Right ventricle myocardium inferior (tissue), 1 donor: ENCODE measurements at regions of chr4 and their contacts with region 1.

Region 1: DNA sequence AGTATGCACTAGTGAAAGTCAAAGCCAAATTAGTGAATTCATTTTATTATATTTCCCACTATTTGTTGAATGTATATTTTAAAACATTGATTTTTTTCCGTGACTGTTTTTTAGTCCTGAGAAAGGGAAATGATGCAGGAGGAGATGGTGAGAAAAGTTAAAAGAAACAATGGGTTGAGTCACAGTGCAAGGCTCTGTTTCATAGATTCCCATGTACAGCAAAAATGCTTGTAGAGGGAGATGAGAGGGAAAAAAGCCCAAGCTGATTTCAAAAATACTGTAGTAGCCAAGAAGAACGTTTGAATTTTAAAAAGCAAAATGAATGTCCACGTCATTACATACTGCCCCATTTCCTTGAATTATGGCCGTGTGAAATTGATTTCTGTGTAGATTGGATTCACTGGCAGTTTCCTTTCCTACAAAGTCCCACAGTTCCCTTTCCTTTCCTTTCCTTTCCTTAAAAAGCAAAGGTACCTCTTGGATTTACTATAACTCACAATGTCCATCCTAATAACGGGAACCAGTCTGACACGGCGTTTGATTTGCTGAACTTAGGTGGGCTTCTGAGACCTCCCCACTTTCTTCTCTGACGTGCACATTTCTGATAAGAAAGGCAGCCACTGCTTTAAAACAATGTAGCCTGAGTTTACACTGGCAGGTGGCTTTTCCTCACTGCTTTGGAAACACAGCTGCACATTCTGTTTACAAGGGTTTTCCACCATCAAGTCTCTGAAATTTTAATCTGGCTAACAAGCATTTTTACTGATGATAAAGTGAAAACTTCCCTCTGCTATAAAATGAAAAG is 63.7 kb downstream of the SPCS3 start:
- DNase-seq: no peak
- ATAC-seq: no peak

Region 2: DNA sequence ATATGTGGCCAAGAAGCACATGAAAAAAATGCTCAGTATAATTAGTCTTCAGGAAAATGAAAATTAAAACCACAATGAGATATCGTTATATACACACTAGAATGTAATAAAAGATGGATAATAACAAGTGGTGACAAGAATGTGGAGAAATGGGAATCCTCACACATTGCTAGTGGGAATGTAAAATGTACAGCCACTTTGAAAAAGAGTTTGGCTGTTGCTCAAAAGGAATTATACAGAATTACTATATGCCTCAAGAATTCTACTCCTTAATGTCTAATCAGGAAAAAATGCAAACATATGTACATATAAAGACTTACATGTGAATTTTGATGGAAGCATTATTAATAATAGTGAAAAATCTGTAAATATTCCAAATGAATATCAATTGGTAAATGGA is 38.5 kb after region 1 on chr4:
- intact Hi-C with region 1: no loop called
- DNase-seq: no peak
- ATAC-seq: no peak

Region 3: GRCh38 chr4:176432811-176433540 is 49.5 kb after region 1 on chr4:
- intact Hi-C with region 1: no loop called
- DNase-seq: no peak
- ATAC-seq: no peak

Region 4: DNA sequence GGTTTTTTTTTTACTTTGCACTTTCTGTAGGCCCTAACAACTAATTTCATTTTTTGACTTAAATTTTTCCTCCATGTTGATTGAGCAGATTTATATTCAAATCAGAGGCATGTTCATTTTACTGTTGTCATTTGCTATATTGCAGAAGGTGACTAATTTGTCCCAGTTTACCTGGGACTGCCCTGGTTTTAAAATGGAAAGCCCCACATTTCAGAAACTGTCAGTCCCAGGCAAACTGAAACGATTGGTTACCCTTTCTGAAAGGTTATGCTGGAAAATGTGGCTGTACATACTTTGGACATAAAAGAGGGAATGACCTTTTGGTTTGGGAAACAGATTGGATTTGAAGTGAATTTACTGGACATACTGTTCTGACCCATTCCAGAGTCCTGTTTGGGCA is 96.3 kb after region 1 on chr4:
- intact Hi-C with region 1: no loop called
- DNase-seq: no peak
- ATAC-seq: no peak

Region 5: GRCh38 chr4:176492646-176493302 is 109.3 kb after region 1 on chr4:
- intact Hi-C with region 1: loop called (anchors 10 kb)
- DNase-seq: no peak
- ATAC-seq: no peak

Region 6: DNA sequence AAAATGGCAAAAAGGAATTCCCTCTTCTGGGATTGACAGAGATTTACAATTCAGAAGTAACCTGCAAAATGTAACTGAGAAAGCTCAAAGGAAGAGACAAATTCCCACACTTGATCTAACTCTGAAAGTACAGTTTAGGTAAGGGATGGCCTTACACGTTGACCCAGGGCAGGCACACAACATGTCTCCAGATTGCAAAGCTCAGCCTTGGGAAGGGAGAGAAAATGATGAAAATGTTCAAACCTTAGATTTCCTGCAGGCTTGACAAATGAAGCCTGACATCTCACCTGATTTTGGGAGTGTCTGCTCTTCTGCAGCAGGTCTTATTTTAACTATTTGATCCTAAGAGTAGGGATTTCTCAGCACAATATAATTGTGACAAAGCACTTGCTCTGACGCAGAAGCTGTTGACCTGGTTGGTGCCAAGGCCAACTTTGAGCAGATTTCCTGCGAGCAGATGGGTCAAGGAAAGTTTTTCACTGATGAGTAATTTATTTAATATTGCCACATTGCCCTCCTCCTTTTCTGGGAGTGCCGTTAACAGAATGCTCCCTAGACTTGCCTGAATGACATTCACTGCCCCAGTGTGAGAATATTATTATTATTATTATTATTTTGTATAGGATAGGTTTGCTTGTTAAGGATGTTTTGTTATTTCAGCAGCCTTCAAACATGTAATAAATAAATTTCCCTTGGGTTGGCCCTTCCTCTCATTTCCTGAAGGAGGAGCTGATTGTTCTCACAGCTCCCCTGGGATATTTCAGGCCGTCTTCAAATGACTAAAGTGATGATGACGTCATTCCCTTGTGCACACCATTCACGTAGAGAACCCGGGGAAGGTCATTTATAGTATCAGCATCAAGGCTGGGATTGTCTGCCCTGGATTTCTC is 252.1 kb after region 1 on chr4:
- intact Hi-C with region 1: loop called (anchors 10 kb)
- DNase-seq: no peak
- ATAC-seq: no peak